IMR-90 (cell line): ENCODE measurements at regions of chr7 and their contacts with region 1.

Region 1: GRCh38 chr7:117061751-117062150 is 108.5 kb downstream of the ST7 start:
- DNase-seq: peak; percentile 80
- ATAC-seq: peak; percentile 75
- H3K4me3 ChIP-seq: no peak overlapping the region
- H3K27ac ChIP-seq: peak overlapping the region; percentile 62
- H3K4me1 ChIP-seq: peaks cover 7% of the 10 kb centered on the region
- H3K27me3 ChIP-seq: no peaks in the 10 kb centered on the region
- CTCF ChIP-seq: no peak
- POLR2A ChIP-seq: no peak
- RAD21 ChIP-seq: no peak

Region 2: GRCh38 chr7:116786791-116787443 is 274.8 kb before region 1 on chr7:
- CTCF ChIA-PET with region 1: no interaction called
- POLR2A ChIA-PET with region 1: no interaction called
- dilution Hi-C with region 1: no loop called
- in situ Hi-C with region 1: no loop called
- intact Hi-C with region 1: no loop called
- DNase-seq: peak; percentile 46
- ATAC-seq: no peak
- H3K4me3 ChIP-seq: no peak overlapping the region
- H3K27ac ChIP-seq: no peak overlapping the region
- H3K4me1 ChIP-seq: peaks cover 4% of the 10 kb centered on the region
- H3K27me3 ChIP-seq: no peaks in the 10 kb centered on the region
- CTCF ChIP-seq: peak; percentile 46
- POLR2A ChIP-seq: no peak
- RAD21 ChIP-seq: peak; percentile 48; the same call in 1 of the 2 replicates

Region 3: GRCh38 chr7:116953727-116954442 is 107.9 kb before region 1 on chr7:
- CTCF ChIA-PET with region 1: no interaction called
- POLR2A ChIA-PET with region 1: no interaction called
- dilution Hi-C with region 1: no loop called
- in situ Hi-C with region 1: no loop called
- intact Hi-C with region 1: no loop called
- DNase-seq: peak; percentile 88
- ATAC-seq: peak; percentile 77
- H3K4me3 ChIP-seq: peak overlapping the region; percentile 67
- H3K27ac ChIP-seq: peak overlapping the region; percentile 98
- H3K4me1 ChIP-seq: peaks cover 9% of the 10 kb centered on the region
- H3K27me3 ChIP-seq: no peaks in the 10 kb centered on the region
- CTCF ChIP-seq: no peak
- POLR2A ChIP-seq: peak; percentile 71
- RAD21 ChIP-seq: no peak

Region 4: GRCh38 chr7:117019786-117020590 is 41.8 kb before region 1 on chr7:
- CTCF ChIA-PET with region 1: no interaction called
- POLR2A ChIA-PET with region 1: no interaction called
- dilution Hi-C with region 1: no loop called
- in situ Hi-C with region 1: no loop called
- intact Hi-C with region 1: loop called (anchors 5 kb)
- DNase-seq: peak; percentile 97
- ATAC-seq: peak; percentile 97
- H3K4me3 ChIP-seq: peak overlapping the region; percentile 35
- H3K27ac ChIP-seq: peak overlapping the region; percentile 29
- H3K4me1 ChIP-seq: peaks cover 3% of the 10 kb centered on the region
- H3K27me3 ChIP-seq: no peaks in the 10 kb centered on the region
- CTCF ChIP-seq: no peak
- POLR2A ChIP-seq: peak; percentile 50; the same call in 1 of the 2 replicates
- RAD21 ChIP-seq: no peak; the same call in 1 of the 2 replicates

Region 5: DNA sequence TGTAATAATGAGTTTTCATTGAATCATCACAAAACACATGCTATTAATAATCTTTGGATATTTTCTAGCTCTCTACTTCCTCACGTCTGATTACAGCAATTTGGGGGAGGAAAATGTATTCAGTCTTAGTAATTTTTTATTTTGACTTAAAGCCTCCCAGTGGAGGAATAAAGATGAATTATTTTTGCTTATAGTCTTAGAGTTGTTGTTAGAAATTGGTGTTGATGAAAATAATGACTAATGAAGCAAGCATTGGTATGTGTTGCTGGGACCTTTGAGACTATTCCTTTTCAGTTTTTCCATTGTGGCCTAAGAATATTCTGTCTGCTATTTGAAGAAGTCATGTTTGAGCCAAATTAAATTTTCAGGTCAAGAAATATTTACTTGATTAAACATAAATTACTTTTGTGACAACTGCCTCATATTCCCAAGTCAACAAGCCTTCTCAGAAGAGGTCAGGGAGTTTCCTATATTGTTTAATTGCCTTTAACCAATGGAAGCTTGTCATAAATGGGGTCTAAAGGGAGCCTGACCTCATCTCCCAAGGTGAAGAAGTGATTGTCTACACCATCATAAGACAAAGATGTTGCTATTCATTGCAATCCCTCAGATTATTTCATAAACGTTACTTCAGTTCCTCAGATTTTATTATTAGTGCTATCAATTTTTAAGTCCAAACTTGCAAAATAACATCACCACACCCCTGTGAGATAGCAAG is 18.5 kb before region 1 on chr7:
- CTCF ChIA-PET with region 1: interaction called, 4 read pairs
- POLR2A ChIA-PET with region 1: no interaction called
- dilution Hi-C with region 1: no loop called
- in situ Hi-C with region 1: no loop called
- intact Hi-C with region 1: loop called (anchors 2 kb)
- DNase-seq: no peak
- ATAC-seq: no peak
- H3K4me3 ChIP-seq: no peak overlapping the region
- H3K27ac ChIP-seq: no peak overlapping the region
- H3K4me1 ChIP-seq: peaks cover 6% of the 10 kb centered on the region; the same call in 1 of the 2 replicates
- H3K27me3 ChIP-seq: no peaks in the 10 kb centered on the region
- CTCF ChIP-seq: no peak
- POLR2A ChIP-seq: no peak
- RAD21 ChIP-seq: no peak

Region 6: GRCh38 chr7:117072620-117073118 is 10.9 kb after region 1 on chr7:
- CTCF ChIA-PET with region 1: no interaction called
- POLR2A ChIA-PET with region 1: no interaction called
- dilution Hi-C with region 1: no loop called
- in situ Hi-C with region 1: no loop called
- intact Hi-C with region 1: loop called (anchors 2 kb)
- DNase-seq: peak; percentile 71
- ATAC-seq: peak; percentile 49
- H3K4me3 ChIP-seq: no peak overlapping the region
- H3K27ac ChIP-seq: no peak overlapping the region
- H3K4me1 ChIP-seq: no peaks in the 10 kb centered on the region
- H3K27me3 ChIP-seq: no peaks in the 10 kb centered on the region
- CTCF ChIP-seq: no peak
- POLR2A ChIP-seq: no peak
- RAD21 ChIP-seq: no peak